A549 (cell line): ENCODE measurements at regions of chr1 and their contacts with region 1.

Region 1: GRCh38 chr1:19096036-19096833 is 113.8 kb downstream of the UBR4 start:
- DNase-seq: peak; percentile 56 to 71
- ATAC-seq: peak; percentile 93 to 94
- H3K4me3 ChIP-seq: no peak overlapping the region
- H3K27ac ChIP-seq: peak overlapping the region; percentile 4 to 71; a peak in 5 of 6 replicates
- H3K4me1 ChIP-seq: peaks cover 15% of the 10 kb centered on the region
- CTCF ChIP-seq: peak; percentile 69
- EP300 ChIP-seq: no peak
- POLR2A ChIP-seq: no peak
- RAD21 ChIP-seq: peak; percentile 88 to 90

Region 2: GRCh38 chr1:18787825-18788385 is 308.3 kb before region 1 on chr1:
- CTCF ChIA-PET with region 1: no interaction called
- POLR2A ChIA-PET with region 1: no interaction called
- DNase-seq: no peak
- ATAC-seq: no peak
- H3K4me3 ChIP-seq: no peak overlapping the region
- H3K27ac ChIP-seq: no peak overlapping the region
- H3K4me1 ChIP-seq: no peaks in the 10 kb centered on the region
- CTCF ChIP-seq: no peak
- EP300 ChIP-seq: no peak
- POLR2A ChIP-seq: no peak
- RAD21 ChIP-seq: no peak

Region 3: DNA sequence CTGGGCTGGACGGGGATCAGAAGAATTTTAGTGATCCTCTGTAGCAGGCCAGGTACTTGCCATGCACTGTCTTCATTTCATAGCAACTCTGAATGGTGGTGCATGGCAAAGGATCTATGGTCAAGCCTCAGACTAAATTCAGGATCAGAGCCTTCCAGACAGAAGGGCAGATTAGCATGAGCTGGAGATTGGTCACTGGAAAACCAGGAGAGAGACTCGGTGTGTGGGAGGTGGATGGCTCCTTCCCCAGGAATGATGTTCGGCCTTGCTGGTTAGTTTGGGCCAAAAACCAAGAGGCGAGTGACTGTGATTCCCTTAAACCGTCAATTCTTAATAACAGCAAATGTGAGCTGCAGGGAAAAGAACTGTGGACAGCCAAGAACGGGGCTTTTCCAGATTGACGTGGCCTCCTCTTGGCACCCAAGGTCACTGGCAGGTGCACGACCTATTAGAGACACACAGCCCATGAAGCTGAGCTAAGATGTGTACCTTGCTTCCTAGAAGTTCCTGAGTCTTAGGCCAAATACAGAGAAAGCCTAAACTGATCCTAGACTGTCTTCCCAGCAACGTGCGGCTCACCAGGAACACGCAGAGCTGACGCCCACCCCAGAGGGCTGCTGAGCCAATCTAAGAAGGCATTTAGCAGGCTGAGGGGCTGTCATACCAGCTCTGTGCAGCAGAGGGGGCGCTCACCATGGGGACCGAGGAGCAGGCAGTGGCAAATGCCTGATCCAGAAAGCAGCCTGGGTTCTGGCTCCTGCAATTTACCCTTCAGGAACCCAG is 212.4 kb before region 1 on chr1:
- CTCF ChIA-PET with region 1: interaction called, 83 read pairs
- POLR2A ChIA-PET with region 1: no interaction called
- DNase-seq: peak; percentile 50 to 61
- ATAC-seq: peak; percentile 73 to 90
- H3K4me3 ChIP-seq: no peak overlapping the region
- H3K27ac ChIP-seq: no peak overlapping the region; a peak in 1 of 6 replicates
- H3K4me1 ChIP-seq: peaks cover 9% of the 10 kb centered on the region; the same call in 2 of the 3 replicates
- CTCF ChIP-seq: peak; percentile 63
- EP300 ChIP-seq: no peak
- POLR2A ChIP-seq: no peak
- RAD21 ChIP-seq: peak; percentile 77 to 81

Region 4: DNA sequence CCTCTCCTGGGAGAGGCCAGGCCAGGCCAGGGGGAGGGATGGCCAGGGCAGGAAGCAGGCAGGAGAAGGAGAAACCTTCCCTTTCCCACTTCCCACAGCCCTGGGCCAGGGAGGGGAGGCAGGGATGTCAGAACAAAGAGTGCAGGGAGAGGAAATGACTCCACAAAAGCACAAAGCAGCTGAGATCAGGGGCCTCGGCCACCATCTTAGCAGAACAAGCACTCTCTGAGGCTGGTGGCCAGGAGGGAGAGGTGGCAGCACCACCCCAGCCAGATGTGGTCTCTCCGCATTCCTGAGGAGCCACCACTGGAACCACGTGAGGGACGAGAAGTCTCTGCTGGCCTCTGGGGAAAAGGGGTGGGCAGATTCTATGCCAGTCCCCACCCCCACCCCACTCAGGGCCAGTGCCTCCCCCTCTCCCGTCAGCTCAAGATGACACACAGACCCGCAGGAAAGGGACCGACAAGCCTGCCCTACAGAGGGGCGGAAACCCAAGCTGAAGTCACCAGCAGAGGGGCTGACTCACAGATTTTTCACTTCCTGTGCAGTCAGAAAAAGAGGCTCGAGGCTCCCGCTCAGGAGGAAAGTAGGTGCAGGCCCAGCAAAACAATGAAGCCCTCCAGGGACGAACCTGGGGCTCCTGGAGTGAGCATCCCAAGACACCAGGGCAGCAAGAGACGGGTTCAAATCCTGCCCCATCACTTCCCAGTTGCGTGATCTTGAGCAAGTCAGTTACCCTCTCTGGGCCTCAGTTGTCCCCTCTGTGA is 169.7 kb before region 1 on chr1:
- CTCF ChIA-PET with region 1: interaction called, 14 read pairs
- POLR2A ChIA-PET with region 1: no interaction called
- DNase-seq: peak; percentile 73 to 84
- ATAC-seq: peak; percentile 63 to 67; a peak in 5 of 6 replicates
- H3K4me3 ChIP-seq: no peak overlapping the region
- H3K27ac ChIP-seq: peak overlapping the region; percentile 78 to 94
- H3K4me1 ChIP-seq: peaks cover 83% of the 10 kb centered on the region
- CTCF ChIP-seq: no peak
- EP300 ChIP-seq: no peak
- POLR2A ChIP-seq: no peak
- RAD21 ChIP-seq: no peak

Region 5: GRCh38 chr1:18999359-18999758 is 96.9 kb before region 1 on chr1:
- CTCF ChIA-PET with region 1: no interaction called
- POLR2A ChIA-PET with region 1: no interaction called
- DNase-seq: no peak
- ATAC-seq: no peak
- H3K4me3 ChIP-seq: no peak overlapping the region
- H3K27ac ChIP-seq: no peak overlapping the region
- H3K4me1 ChIP-seq: no peaks in the 10 kb centered on the region
- CTCF ChIP-seq: no peak
- EP300 ChIP-seq: no peak
- POLR2A ChIP-seq: no peak
- RAD21 ChIP-seq: no peak

Region 6: GRCh38 chr1:19010995-19011844 is 85.0 kb before region 1 on chr1:
- CTCF ChIA-PET with region 1: interaction called, 37 read pairs
- POLR2A ChIA-PET with region 1: no interaction called
- DNase-seq: peak; percentile 69 to 96
- ATAC-seq: peak; percentile 69 to 82
- H3K4me3 ChIP-seq: 0 out of 3 replicates have a peak overlapping the region, but pooled peaks have one; percentile 11
- H3K27ac ChIP-seq: peak overlapping the region; percentile 97 to 100
- H3K4me1 ChIP-seq: peaks cover 80% of the 10 kb centered on the region
- CTCF ChIP-seq: no peak
- EP300 ChIP-seq: peak; percentile 77 to 87; a peak in 4 of 5 replicates
- POLR2A ChIP-seq: peak; percentile 33; the same call in 1 of the 2 replicates
- RAD21 ChIP-seq: peak; percentile 2 to 55; a peak in 4 of 5 replicates

Region 7: DNA sequence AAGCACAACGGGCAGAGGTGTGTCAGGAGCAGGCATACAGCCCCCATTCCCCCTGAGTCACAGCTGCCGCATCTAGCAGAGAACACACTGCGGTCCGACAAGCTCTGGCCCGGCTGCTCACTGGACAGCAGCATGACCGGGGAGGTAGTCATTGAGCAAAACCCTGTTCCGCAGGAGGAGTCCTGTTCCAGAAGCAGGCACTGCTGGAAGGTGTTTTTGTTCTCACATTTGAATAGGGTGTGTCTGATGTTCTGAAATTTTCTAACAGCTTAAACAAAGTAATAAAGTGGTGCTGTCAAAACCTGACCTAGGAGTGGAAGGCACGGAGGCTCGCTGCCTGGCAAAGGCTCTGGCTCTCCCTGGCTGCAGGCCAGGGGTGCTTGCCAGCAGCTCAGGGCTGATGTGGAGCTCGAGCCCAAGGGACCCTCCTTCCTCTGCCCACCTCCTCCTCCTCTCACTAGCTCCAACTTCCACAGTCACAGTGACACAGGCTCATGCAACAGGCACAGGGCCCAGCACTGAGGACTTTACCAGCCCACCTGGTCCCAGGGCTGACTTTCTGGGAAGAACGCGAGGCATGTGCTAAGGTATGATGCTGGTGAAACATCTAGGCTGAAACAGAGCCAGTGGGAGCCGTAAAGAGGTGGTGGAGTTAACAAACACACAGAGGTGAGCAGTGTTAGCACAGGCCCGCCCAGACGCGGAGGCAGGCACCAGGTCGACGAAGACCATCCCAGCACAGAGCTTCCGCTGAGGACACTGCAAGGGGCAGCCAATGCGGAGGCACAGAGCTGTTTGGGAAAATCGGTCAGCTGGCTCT is 21.1 kb before region 1 on chr1:
- CTCF ChIA-PET with region 1: interaction called, 16 read pairs
- POLR2A ChIA-PET with region 1: no interaction called
- DNase-seq: no peak
- ATAC-seq: no peak
- H3K4me3 ChIP-seq: no peak overlapping the region
- H3K27ac ChIP-seq: peak overlapping the region in 1 of 2 experiments; percentile 45; a peak in 1 of 6 replicates
- H3K4me1 ChIP-seq: peaks cover 18% of the 10 kb centered on the region
- CTCF ChIP-seq: no peak
- EP300 ChIP-seq: no peak
- POLR2A ChIP-seq: no peak
- RAD21 ChIP-seq: no peak

Region 8: DNA sequence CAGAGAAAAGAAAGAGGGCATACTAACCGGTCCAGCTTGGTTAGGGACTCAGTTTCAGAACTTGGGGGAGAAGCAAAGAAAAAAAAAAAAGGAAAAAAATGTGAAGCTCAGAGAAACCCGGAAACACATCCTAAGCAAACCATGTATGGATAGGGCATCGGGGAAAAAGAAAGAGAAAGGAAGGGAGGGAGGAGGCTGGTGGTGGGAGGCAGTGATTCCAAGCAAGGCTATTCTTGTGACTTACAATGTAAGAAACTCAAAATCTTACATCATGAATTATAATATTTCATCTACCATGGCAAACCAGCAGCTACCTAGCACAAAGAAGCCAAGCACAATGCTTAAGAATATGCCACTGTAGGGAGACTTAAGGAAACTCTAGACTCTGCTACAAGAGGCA is 53.5 kb after region 1 on chr1:
- CTCF ChIA-PET with region 1: no interaction called
- POLR2A ChIA-PET with region 1: no interaction called
- DNase-seq: no peak
- ATAC-seq: no peak
- H3K4me3 ChIP-seq: no peak overlapping the region
- H3K27ac ChIP-seq: no peak overlapping the region
- H3K4me1 ChIP-seq: no peaks in the 10 kb centered on the region
- CTCF ChIP-seq: no peak
- EP300 ChIP-seq: no peak
- POLR2A ChIP-seq: no peak
- RAD21 ChIP-seq: no peak